Naive thymus-derived CD4-positive, alpha-beta T cell (primary cell): ENCODE measurements at regions of chr4 and their contacts with region 1.

Region 1: GRCh38 chr4:108166441-108167315 is 2.1 kb downstream of the LEF1 start:
- DNase-seq: peak; percentile 38 to 89 (median 70)
- ATAC-seq: peak; percentile 41
- H3K4me3 ChIP-seq: peak overlapping the region; percentile 77
- H3K4me3 Mint-ChIP-seq: peak overlapping the region; percentile 89 to 100 (median 98)
- H3K27ac ChIP-seq: peak overlapping the region; percentile 87
- H3K27ac Mint-ChIP-seq: peak overlapping the region; percentile 90 to 98 (median 97)
- H3K4me1 ChIP-seq: peaks cover 8 to 13% of the 10 kb centered on the region in 2 donors
- H3K4me1 Mint-ChIP-seq: peaks cover 13 to 46% (median 25%) of the 10 kb centered on the region in 7 donors
- H3K27me3 ChIP-seq: no peaks in the 10 kb centered on the region
- H3K27me3 Mint-ChIP-seq: peaks cover 0 to 33% (median 0%) of the 10 kb centered on the region in 5 donors

Region 2: DNA sequence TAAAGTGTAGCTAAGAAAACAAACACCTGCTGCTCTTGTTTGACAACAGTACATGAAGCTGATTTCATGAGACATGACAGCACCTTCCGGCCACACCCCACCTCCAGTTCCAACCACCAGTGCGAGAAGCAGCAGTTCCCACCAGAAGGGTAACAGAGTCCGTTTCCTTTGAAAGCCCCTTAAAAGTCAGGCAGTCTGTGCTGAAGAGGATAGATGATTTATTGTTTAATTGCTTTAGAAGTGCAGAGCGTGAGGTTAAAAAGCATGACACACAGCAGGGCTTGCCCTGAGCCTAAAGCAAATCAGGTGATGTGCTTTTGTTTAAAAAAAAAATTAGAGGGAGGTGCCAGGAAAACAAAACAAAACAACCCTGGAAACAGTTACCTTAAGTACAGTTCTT is 94.4 kb before region 1 on chr4:
- CTCF ChIA-PET with region 1: interaction called, 3 read pairs
- POLR2A ChIA-PET with region 1: interaction called, 3 read pairs
- intact Hi-C with region 1: loop called (anchors 1 to 2 kb)
- DNase-seq: peak in 7 of 9 donors; percentile 63 to 94 (median 80)
- ATAC-seq: peak; percentile 92
- H3K4me3 ChIP-seq: peak overlapping the region; percentile 0
- H3K4me3 Mint-ChIP-seq: peak overlapping the region; percentile 53 to 81 (median 74)
- H3K27ac ChIP-seq: peak overlapping the region; percentile 77
- H3K27ac Mint-ChIP-seq: peak overlapping the region; percentile 84 to 98 (median 94)
- H3K4me1 ChIP-seq: peaks cover 23 to 62% of the 10 kb centered on the region in 2 donors
- H3K4me1 Mint-ChIP-seq: peaks cover 32 to 95% (median 81%) of the 10 kb centered on the region in 7 donors
- H3K27me3 ChIP-seq: no peaks in the 10 kb centered on the region
- H3K27me3 Mint-ChIP-seq: no peaks in the 10 kb centered on the region

Region 3: DNA sequence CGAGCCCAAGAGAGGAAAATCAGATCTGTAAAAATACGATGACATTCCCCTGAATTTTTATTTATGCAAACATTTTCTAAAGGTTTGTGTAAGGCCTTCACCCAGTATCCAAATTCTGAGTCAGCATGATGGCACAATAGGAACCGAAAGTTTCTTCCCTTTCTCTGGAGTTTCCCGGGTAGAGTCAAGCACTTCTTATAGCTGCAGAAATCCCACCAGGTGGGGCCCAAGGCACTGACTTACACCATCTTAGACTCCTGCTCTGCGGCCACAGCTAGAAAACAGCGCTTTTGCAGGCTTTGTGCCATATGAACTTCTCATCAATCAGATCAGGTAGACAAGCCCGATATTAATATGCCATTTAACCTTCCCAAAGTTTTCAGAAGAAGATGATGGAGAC is 11.3 kb before region 1 on chr4:
- CTCF ChIA-PET with region 1: interaction called, 8 read pairs
- POLR2A ChIA-PET with region 1: interaction called, 191 read pairs
- intact Hi-C with region 1: loop called (anchors 1 kb)
- DNase-seq: peak in 2 of 9 donors; percentile 38 to 65
- ATAC-seq: peak; percentile 65
- H3K4me3 ChIP-seq: peak overlapping the region; percentile 14
- H3K4me3 Mint-ChIP-seq: peak overlapping the region; percentile 83 to 100 (median 97)
- H3K27ac ChIP-seq: peak overlapping the region; percentile 87
- H3K27ac Mint-ChIP-seq: peak overlapping the region; percentile 66 to 97 (median 92)
- H3K4me1 ChIP-seq: peaks cover 35 to 72% of the 10 kb centered on the region in 2 donors
- H3K4me1 Mint-ChIP-seq: peaks cover 31 to 99% (median 80%) of the 10 kb centered on the region in 7 donors
- H3K27me3 ChIP-seq: no peaks in the 10 kb centered on the region
- H3K27me3 Mint-ChIP-seq: no peaks in the 10 kb centered on the region

Region 4: GRCh38 chr4:108398316-108398715 is 231.6 kb after region 1 on chr4:
- CTCF ChIA-PET with region 1: no interaction called
- POLR2A ChIA-PET with region 1: no interaction called
- intact Hi-C with region 1: no loop called
- DNase-seq: peak in 1 of 9 donors; percentile 15
- ATAC-seq: peak; percentile 26
- H3K4me3 ChIP-seq: no peak overlapping the region
- H3K4me3 Mint-ChIP-seq: no peak overlapping the region
- H3K27ac ChIP-seq: no peak overlapping the region
- H3K27ac Mint-ChIP-seq: no peak overlapping the region
- H3K4me1 ChIP-seq: peaks cover 0 to 5% of the 10 kb centered on the region in 2 donors
- H3K4me1 Mint-ChIP-seq: peaks cover 2 to 28% (median 16%) of the 10 kb centered on the region in 7 donors
- H3K27me3 ChIP-seq: no peaks in the 10 kb centered on the region
- H3K27me3 Mint-ChIP-seq: peaks cover 0 to 3% (median 0%) of the 10 kb centered on the region in 5 donors

Region 5: GRCh38 chr4:108512615-108513505 is 346.2 kb after region 1 on chr4:
- CTCF ChIA-PET with region 1: interaction called, 4 read pairs
- POLR2A ChIA-PET with region 1: interaction called, 3 read pairs
- intact Hi-C with region 1: loop called (anchors 1 to 5 kb)
- DNase-seq: peak in 7 of 9 donors; percentile 42 to 68 (median 58)
- ATAC-seq: peak; percentile 82
- H3K4me3 ChIP-seq: peak overlapping the region; percentile 6
- H3K4me3 Mint-ChIP-seq: peak overlapping the region; percentile 72 to 87 (median 80)
- H3K27ac ChIP-seq: no peak overlapping the region
- H3K27ac Mint-ChIP-seq: peak overlapping the region in 7 of 9 donors; percentile 33 to 79 (median 71)
- H3K4me1 ChIP-seq: peaks cover 0 to 10% of the 10 kb centered on the region in 2 donors
- H3K4me1 Mint-ChIP-seq: peaks cover 9 to 37% (median 23%) of the 10 kb centered on the region in 7 donors
- H3K27me3 ChIP-seq: no peaks in the 10 kb centered on the region
- H3K27me3 Mint-ChIP-seq: peaks cover 0 to 11% (median 0%) of the 10 kb centered on the region in 5 donors